ENCODE measurements at regions of chr22 and their contacts with region 1.

Region 1: DNA sequence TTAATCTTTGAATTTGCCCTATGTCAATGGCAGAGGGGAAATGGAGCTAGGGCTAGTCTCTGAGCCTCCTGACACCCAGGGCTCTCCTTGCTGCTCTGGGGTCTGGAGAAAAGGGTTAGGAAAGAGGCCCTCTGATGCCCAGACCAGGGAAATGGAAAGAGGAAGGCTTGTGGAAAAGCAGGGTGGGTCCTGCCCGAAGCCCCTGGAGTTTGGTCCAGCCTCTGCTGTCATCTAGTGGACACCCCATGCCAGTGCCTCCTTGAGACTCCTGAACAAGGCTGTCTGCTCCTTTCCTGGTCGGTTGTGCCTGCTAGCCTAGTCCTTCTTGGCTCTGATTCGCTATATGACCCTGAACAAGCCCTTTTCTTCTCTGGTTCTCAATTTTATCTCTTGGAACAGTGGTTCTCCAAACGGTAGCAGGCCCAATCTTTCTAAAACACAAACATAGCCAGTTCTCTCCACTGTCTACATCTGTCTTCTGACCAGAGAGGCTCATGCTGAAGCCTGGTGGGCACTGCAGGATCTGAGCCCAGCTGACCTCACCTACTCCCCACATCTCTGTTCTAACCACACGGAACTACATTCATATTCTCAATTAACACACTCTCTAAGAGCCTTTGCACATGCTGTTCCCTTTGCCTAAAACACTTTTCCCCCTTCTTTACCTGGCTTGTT is 8.8 kb upstream of the PLA2G3 start:
- DNase-seq: peak in 2 of 3 donors; percentile 70 to 73
- ATAC-seq: peak; percentile 93
- H3K4me3 ChIP-seq: no peak overlapping the region
- H3K4me1 ChIP-seq: peaks cover 4% of the 10 kb centered on the region
- CTCF ChIP-seq: peak; percentile 78

Region 2: GRCh38 chr22:30947816-30948454 is 201.2 kb before region 1 on chr22:
- intact Hi-C with region 1: loop called in 1 of 2 experiments (anchors 10 kb)
- DNase-seq: no peak
- ATAC-seq: peak; percentile 80
- H3K4me3 ChIP-seq: no peak overlapping the region
- H3K4me1 ChIP-seq: no peaks in the 10 kb centered on the region
- CTCF ChIP-seq: no peak

Region 3: DNA sequence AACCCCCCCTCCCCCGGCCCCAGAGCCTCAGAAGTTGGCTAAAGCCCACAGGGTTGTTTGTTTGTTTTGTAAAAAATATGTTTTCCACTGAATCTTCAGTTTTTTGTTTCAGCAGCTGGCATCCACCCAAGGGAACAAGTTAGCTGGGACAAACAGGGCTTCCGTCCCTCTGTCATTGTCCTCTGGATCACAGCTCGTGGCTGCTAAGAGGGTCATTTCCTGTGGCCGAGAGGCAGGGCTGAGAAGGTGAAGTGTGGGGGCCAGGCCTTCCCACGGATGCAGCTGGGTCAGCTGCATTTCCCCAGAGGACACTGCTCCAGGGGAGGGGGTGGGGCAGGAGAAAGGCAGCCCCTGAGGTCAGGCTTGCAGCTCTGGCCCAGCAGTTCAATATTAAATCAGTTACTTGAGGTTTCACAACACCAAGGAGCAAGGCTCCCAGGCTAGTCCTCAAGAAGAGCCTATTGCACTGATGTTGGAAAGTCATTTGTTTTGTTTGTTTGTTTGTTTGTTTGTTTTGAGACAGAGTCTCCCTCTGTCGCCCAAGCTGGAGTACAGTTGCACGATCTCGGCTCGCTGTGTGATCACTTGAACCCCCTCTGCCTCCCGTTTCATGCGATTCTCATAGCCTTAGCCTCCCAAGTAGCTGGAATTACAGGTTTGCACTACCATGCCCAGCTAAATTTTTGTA is 102.4 kb before region 1 on chr22:
- intact Hi-C with region 1: no loop called
- DNase-seq: peak in 1 of 3 donors; percentile 35
- ATAC-seq: no peak
- H3K4me3 ChIP-seq: no peak overlapping the region
- H3K4me1 ChIP-seq: peaks cover 4% of the 10 kb centered on the region
- CTCF ChIP-seq: no peak

Region 4: DNA sequence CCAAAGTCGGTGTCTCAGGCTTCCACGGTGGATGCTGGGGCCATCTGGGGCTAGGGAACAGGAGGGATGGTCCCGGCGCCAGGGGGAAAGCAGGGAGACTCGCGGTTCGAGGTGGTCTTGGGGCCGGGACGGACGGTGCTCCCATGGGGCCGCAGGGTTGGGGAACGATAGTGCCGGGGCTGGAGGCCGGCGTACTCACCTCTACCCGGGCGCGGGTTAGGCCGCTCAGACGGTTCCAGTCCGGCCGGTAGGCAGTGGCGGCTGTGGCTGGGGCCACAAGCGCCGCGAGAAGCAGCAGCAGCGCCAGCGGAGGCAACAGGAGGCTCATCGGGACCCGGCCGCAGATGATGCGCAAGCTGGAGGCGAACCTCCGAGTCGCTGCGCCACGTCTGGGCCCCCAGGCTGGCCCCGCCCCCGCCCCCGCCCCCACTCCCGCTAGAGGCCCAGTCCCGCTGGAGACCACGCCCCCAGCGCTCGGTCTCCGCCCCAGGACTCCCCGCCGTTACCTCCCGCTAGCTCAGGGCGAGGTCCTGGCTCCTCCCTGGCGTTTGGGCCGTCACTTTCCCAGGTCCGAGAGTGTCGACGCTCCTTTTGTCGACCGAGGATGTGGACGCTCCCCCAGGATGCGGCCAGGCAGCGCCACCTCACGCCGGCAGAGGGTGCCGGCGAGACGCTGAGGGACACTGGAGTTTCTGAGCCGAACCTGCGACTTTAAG is 41.8 kb before region 1 on chr22 and contains the start of gene SELENOM:
- intact Hi-C with region 1: loop called in 1 of 2 experiments (anchors 5 kb)
- DNase-seq: peak; percentile 94 to 97 (median 97)
- ATAC-seq: peak; percentile 96
- H3K4me3 ChIP-seq: peak within 1 kb of the TSS; percentile 37
- H3K4me1 ChIP-seq: peaks cover 11% of the 10 kb centered on the region
- CTCF ChIP-seq: peak; percentile 88
- total RNA-seq, gene SELENOM: 22.3 to 286 (median 83.4) TPM

Region 5: DNA sequence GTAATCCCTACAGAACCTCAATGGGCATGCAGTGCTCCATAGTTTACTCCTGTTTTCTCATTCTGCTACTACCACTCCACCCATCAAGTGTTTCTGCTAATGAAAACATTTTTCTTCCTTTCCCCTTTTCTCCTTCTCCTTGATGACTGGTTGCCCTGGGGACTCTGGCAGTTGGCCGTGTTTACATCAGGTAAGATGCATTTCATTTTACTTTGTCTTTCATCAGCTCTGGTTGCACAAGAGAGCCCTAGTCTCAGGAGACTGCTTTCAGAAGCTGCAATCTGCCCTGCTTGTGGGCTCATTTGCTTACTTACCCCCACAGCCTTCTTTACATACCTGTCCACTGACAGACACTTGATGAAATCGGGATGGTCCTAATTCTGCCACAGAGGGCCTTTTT is 43.4 kb after region 1 on chr22:
- intact Hi-C with region 1: no loop called
- DNase-seq: no peak
- ATAC-seq: no peak
- H3K4me3 ChIP-seq: no peak overlapping the region
- H3K4me1 ChIP-seq: no peaks in the 10 kb centered on the region
- CTCF ChIP-seq: no peak

Measured in mucosa of descending colon (tissue), 3 donors.